Colonic mucosa (tissue), 4 donors: ENCODE measurements at regions of chr12 and their contacts with region 1.

Region 1: GRCh38 chr12:125330645-125331341 is 265.6 kb downstream of the AACS start:
- DNase-seq: peak; percentile 74
- H3K4me3 ChIP-seq: peak overlapping the region; percentile 37
- H3K27ac ChIP-seq: no peak overlapping the region
- H3K4me1 ChIP-seq: no peaks in the 10 kb centered on the region
- H3K27me3 ChIP-seq: no peaks in the 10 kb centered on the region
- CTCF ChIP-seq: peak; percentile 84

Region 2: DNA sequence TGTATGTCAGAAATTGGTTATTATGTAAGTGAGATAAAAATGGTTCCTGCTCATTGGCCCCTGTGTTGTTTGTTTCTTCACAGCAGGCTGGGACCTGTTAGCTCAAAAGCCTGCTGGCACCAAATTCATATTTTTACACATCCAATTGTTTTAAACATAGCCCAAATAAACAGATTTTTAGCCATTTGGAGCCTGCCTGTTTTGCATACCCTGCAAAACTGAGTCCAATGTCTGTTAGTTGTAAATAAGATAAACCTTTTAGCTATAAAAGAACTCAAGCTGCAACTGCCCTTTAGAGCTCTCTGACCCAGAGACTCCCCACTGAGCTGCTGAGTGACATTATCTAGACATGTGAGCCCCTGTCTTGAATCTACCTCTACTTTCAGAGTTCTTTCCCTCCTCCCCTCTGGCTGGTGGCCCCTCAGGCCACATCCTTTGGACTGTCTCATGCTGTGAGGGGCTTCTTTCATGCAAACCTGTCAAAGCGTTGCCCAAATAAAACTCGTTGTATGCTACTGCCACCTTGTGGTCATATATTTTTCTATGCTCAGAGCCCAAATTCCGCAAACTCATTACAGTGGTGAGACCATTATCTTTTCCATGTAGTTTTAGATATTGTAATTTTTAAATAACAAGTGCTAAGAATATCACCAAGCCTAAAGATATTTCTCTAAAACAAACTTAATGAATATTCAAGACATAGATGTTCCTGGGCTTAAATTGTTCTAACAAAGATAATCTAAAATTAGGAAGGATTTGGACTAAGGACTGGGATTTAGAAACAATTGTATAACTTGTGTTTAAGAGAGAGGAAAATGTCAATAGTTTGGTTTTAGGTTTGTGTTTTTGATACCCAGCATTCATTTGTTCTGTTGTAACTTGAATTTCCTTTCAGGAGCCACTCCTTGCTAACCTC is 72.3 kb after region 1 on chr12:
- intact Hi-C with region 1: loop called (anchors 2 kb)
- DNase-seq: no peak
- H3K4me3 ChIP-seq: no peak overlapping the region
- H3K27ac ChIP-seq: no peak overlapping the region
- H3K4me1 ChIP-seq: no peaks in the 10 kb centered on the region
- H3K27me3 ChIP-seq: no peaks in the 10 kb centered on the region
- CTCF ChIP-seq: peak; percentile 52

Region 3: GRCh38 chr12:125573271-125573670 is 242.5 kb after region 1 on chr12:
- intact Hi-C with region 1: no loop called
- DNase-seq: no peak
- H3K4me3 ChIP-seq: no peak overlapping the region
- H3K27ac ChIP-seq: no peak overlapping the region
- H3K4me1 ChIP-seq: no peaks in the 10 kb centered on the region
- H3K27me3 ChIP-seq: no peaks in the 10 kb centered on the region
- CTCF ChIP-seq: no peak

Region 4: DNA sequence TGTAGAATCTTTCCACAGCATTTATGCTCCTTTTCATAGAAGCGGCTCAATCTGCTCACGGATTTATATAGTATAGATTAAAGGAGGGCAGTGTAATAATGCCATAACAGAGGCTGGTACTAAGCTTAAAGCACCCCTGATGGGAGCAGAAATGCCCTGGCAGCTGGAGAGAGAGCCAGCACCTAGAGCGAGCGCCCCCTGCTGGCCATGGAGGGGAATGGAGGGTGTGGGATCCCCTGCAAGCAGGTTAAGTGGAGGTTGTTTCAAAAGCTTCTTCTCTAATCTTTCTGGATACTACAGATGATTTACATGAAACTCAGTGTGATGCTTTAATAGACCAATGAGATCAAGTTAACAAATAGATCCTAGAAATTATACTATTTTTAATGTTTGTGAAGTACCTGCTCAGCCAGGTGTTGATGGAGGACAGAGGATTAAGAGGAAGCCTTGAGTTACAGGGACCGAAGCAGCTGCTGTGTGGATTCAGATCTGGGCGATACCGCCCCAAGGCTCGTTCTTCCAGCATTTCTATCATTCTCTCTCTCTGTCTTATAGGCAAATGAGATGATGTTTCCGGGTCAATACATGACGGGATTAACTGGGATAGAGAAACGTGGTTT is 1416.8 kb after region 1 on chr12:
- intact Hi-C with region 1: loop called (anchors 10 kb)
- DNase-seq: peak; percentile 34
- H3K4me3 ChIP-seq: no peak overlapping the region
- H3K27ac ChIP-seq: no peak overlapping the region
- H3K4me1 ChIP-seq: no peaks in the 10 kb centered on the region
- H3K27me3 ChIP-seq: no peaks in the 10 kb centered on the region
- CTCF ChIP-seq: peak; percentile 89